ENCODE measurements at regions of chr2 and their contacts with region 1.

Region 1: GRCh38 chr2:17573085-17573803 is 32.7 kb downstream of the VSNL1 start:
- DNase-seq: no peak
- ATAC-seq: peak; percentile 78 to 96 (median 88)
- H3K4me3 ChIP-seq: no peak overlapping the region
- H3K27ac ChIP-seq: no peak overlapping the region
- H3K4me1 ChIP-seq: no peaks in the 10 kb centered on the region
- H3K27me3 ChIP-seq: no peaks in the 10 kb centered on the region
- CTCF ChIP-seq: peak; percentile 43 to 56 (median 48)
- POLR2A ChIP-seq: no peak

Region 2: GRCh38 chr2:17470855-17471641 is 102.2 kb before region 1 on chr2:
- intact Hi-C with region 1: loop called in 1 of 2 experiments (anchors 10 kb)
- DNase-seq: no peak
- ATAC-seq: peak; percentile 54 to 74 (median 66)
- H3K4me3 ChIP-seq: no peak overlapping the region
- H3K27ac ChIP-seq: no peak overlapping the region
- H3K4me1 ChIP-seq: no peaks in the 10 kb centered on the region
- H3K27me3 ChIP-seq: no peaks in the 10 kb centered on the region
- CTCF ChIP-seq: peak; percentile 39 to 61 (median 46)
- POLR2A ChIP-seq: no peak